A673 (cell line): ENCODE measurements at regions of chr18 and their contacts with region 1.

Region 1: GRCh38 chr18:76405681-76406356 is 89.2 kb downstream of the ZNF516 start:
- DNase-seq: peak; percentile 73
- H3K4me3 ChIP-seq: no peak overlapping the region
- H3K27ac ChIP-seq: no peak overlapping the region
- H3K4me1 ChIP-seq: no peaks in the 10 kb centered on the region
- H3K27me3 ChIP-seq: no peaks in the 10 kb centered on the region
- CTCF ChIP-seq: peak; percentile 78

Region 2: GRCh38 chr18:76153691-76154090 is 252.1 kb before region 1 on chr18:
- CTCF ChIA-PET with region 1: no interaction called
- POLR2A ChIA-PET with region 1: no interaction called
- intact Hi-C with region 1: no loop called
- DNase-seq: no peak
- H3K4me3 ChIP-seq: no peak overlapping the region
- H3K27ac ChIP-seq: no peak overlapping the region
- H3K4me1 ChIP-seq: no peaks in the 10 kb centered on the region
- H3K27me3 ChIP-seq: no peaks in the 10 kb centered on the region
- CTCF ChIP-seq: no peak

Region 3: DNA sequence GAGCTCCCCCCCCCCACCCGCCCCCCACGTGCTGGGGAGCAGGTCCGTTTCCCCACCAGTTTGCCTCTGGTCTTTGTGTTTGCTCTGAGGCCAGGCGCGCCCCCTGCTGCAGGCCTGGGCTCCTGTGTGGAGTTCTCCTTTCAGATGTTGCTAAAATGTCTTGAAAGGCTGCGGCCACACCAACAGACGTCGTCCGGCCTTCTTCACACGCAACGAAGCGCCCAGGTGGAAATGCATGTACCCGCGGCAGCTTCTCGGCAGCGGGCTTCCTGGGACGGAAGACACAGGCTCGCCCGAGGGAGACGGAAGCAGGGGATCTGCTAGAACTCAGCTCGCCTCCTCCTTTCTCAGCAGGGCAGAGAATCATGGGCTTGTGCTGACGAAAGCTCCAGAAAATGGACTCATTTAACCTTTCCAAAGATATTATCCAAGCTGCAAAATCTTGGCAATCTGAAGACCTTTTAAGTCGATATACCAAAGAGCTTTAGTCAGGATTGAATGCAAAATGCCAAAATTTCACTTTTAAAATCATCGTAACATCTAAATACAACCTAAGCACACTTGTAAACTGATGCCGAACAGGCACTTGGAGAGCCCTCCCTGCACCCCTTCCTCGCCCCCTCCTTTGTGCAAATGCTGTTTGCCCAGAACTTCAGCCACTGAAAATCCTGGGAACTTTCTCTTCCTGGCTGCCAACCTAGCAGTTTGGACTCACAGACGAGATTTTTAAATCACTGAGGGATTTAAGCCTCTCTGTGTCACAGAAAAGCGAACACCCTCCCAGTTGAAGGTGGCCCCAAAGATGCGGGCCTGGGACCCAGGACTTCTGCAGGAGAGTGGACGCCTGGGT is 214.7 kb after region 1 on chr18:
- CTCF ChIA-PET with region 1: interaction called, 8 read pairs
- POLR2A ChIA-PET with region 1: no interaction called
- intact Hi-C with region 1: loop called (anchors 1 kb)
- DNase-seq: peak; percentile 82
- H3K4me3 ChIP-seq: peak overlapping the region; percentile 27
- H3K27ac ChIP-seq: peak overlapping the region; percentile 39
- H3K4me1 ChIP-seq: peaks cover 26% of the 10 kb centered on the region
- H3K27me3 ChIP-seq: no peaks in the 10 kb centered on the region
- CTCF ChIP-seq: peak; percentile 62

Region 4: DNA sequence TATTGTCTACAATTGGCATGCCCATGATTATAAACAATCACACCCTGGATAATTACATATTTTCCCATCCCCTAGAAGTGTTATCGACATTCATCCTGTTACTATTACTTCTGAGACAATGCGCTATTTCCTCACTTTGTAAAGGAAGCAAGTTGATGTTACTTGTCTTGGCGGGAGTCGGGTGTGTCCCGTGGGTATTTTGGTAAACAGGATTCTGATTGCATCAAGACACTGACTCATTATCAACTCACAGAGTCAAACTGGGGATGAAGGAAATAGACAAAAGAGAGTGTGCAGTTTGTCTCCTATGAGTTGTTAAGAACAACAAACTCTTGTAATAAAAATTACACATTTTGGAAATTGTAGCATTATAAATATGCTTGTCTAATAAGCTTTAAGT is 986.5 kb after region 1 on chr18:
- CTCF ChIA-PET with region 1: no interaction called
- POLR2A ChIA-PET with region 1: no interaction called
- intact Hi-C with region 1: no loop called
- DNase-seq: no peak
- H3K4me3 ChIP-seq: no peak overlapping the region
- H3K27ac ChIP-seq: no peak overlapping the region
- H3K4me1 ChIP-seq: no peaks in the 10 kb centered on the region
- H3K27me3 ChIP-seq: no peaks in the 10 kb centered on the region
- CTCF ChIP-seq: no peak